IMR-90 (cell line): ENCODE measurements at regions of chr16 and their contacts with region 1.

Region 1: GRCh38 chr16:85275533-85276249 is 163.4 kb upstream of the CIBAR2 start:
- DNase-seq: peak; percentile 41
- ATAC-seq: peak; percentile 89
- H3K4me3 ChIP-seq: no peak overlapping the region
- H3K27ac ChIP-seq: no peak overlapping the region
- H3K4me1 ChIP-seq: peaks cover 4% of the 10 kb centered on the region; the same call in 1 of the 2 replicates
- H3K27me3 ChIP-seq: no peaks in the 10 kb centered on the region
- CTCF ChIP-seq: peak; percentile 85
- POLR2A ChIP-seq: no peak
- RAD21 ChIP-seq: peak; percentile 90

Region 2: DNA sequence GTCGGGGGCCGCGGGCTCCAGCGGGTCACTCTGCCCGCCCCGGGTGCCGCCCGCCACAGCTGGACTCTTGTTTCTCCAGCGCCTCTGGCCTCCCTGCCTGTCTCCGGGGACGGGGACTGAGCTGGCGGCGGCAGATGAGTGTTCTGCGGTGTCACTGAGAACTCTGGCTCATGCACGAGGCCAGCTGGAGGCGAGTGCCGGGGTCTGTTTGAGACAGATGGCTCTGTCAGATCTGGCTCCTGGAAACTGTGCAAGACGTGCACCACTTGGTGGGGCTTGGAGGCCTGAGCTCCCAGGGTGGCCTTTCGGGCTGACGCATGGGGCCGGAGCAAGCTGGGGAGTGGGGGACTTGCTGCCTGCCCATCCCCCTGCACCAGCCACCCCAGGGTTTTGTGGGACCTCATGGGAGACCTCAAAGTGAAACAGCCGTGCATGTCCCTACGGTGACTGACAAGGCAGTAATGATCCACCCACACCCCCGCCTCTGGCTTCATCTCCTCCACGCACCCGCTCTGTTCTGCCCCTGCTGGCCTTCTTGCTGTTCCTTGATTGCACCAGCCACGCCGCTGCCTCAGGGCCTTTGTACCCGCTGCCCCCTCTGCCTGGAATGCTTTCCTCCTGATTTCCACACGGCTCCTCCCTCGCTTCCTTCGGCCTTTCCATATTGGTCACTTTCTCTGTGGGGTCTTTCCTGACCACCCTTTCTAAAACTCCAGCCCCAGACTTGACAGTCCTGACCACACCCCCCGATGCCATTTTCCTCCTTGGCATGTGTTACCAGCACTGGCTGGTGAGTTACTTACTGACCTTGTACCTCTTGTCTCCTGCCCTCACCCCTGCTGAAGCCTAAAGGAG is 11.5 kb after region 1 on chr16:
- CTCF ChIA-PET with region 1: interaction called, 4 read pairs
- POLR2A ChIA-PET with region 1: interaction called, 14 read pairs
- dilution Hi-C with region 1: no loop called
- in situ Hi-C with region 1: no loop called
- intact Hi-C with region 1: no loop called
- DNase-seq: peak; percentile 65
- ATAC-seq: peak; percentile 76
- H3K4me3 ChIP-seq: no peak overlapping the region
- H3K27ac ChIP-seq: peak overlapping the region; percentile 18; the same call in 1 of the 2 replicates
- H3K4me1 ChIP-seq: peaks cover 17% of the 10 kb centered on the region
- H3K27me3 ChIP-seq: no peaks in the 10 kb centered on the region
- CTCF ChIP-seq: no peak; the same call in 1 of the 2 replicates
- POLR2A ChIP-seq: no peak
- RAD21 ChIP-seq: no peak

Region 3: GRCh38 chr16:85330694-85331188 is 55.0 kb after region 1 on chr16:
- CTCF ChIA-PET with region 1: no interaction called
- POLR2A ChIA-PET with region 1: no interaction called
- dilution Hi-C with region 1: no loop called
- in situ Hi-C with region 1: no loop called
- intact Hi-C with region 1: loop called (anchors 1 kb)
- DNase-seq: peak; percentile 86
- ATAC-seq: peak; percentile 83
- H3K4me3 ChIP-seq: no peak overlapping the region
- H3K27ac ChIP-seq: no peak overlapping the region
- H3K4me1 ChIP-seq: peaks cover 14% of the 10 kb centered on the region; the same call in 1 of the 2 replicates
- H3K27me3 ChIP-seq: no peaks in the 10 kb centered on the region
- CTCF ChIP-seq: peak; percentile 55
- POLR2A ChIP-seq: no peak
- RAD21 ChIP-seq: peak; percentile 50

Region 4: GRCh38 chr16:85341972-85342695 is 66.4 kb after region 1 on chr16:
- CTCF ChIA-PET with region 1: no interaction called
- POLR2A ChIA-PET with region 1: no interaction called
- dilution Hi-C with region 1: no loop called
- in situ Hi-C with region 1: no loop called
- intact Hi-C with region 1: no loop called
- DNase-seq: no peak
- ATAC-seq: no peak
- H3K4me3 ChIP-seq: no peak overlapping the region
- H3K27ac ChIP-seq: no peak overlapping the region
- H3K4me1 ChIP-seq: no peaks in the 10 kb centered on the region
- H3K27me3 ChIP-seq: no peaks in the 10 kb centered on the region
- CTCF ChIP-seq: no peak
- POLR2A ChIP-seq: no peak
- RAD21 ChIP-seq: no peak